ENCODE measurements at regions of chr15 and their contacts with region 1.

Region 1: GRCh38 chr15:40108855-40109735 is at the start of gene BMF:
- DNase-seq: peak; percentile 95
- H3K4me3 Mint-ChIP-seq: peak within 1 kb of the TSS; percentile 92
- H3K27ac Mint-ChIP-seq: peak within 1 kb of the TSS; percentile 87
- H3K4me1 Mint-ChIP-seq: peaks cover 51% of the 10 kb centered on the region
- H3K27me3 Mint-ChIP-seq: peaks cover 12% of the 10 kb centered on the region
- total RNA-seq, gene BMF: 10.1 and 16.5 TPM in 2 replicates

Region 2: GRCh38 chr15:39782441-39783138 is 326.5 kb before region 1 on chr15 and contains the start of gene FSIP1:
- intact Hi-C with region 1: loop called (anchors 2 kb)
- DNase-seq: peak; percentile 94
- H3K4me3 Mint-ChIP-seq: peak within 1 kb of the TSS; percentile 86
- H3K27ac Mint-ChIP-seq: peak within 1 kb of the TSS; percentile 75
- H3K4me1 Mint-ChIP-seq: peaks cover 43% of the 10 kb centered on the region
- H3K27me3 Mint-ChIP-seq: peaks cover 7% of the 10 kb centered on the region
- total RNA-seq, gene FSIP1: 0.26 and 0.34 TPM in 2 replicates

Region 3: GRCh38 chr15:40038638-40039543 is 70.2 kb before region 1 on chr15 and contains the start of gene SRP14:
- intact Hi-C with region 1: loop called (anchors 1 kb)
- DNase-seq: peak; percentile 88
- H3K4me3 Mint-ChIP-seq: peak within 1 kb of the TSS; percentile 100
- H3K27ac Mint-ChIP-seq: peak within 1 kb of the TSS; percentile 98
- H3K4me1 Mint-ChIP-seq: peaks cover 44% of the 10 kb centered on the region
- H3K27me3 Mint-ChIP-seq: no peaks in the 10 kb centered on the region
- total RNA-seq, gene SRP14: 144 and 147 TPM in 2 replicates

Region 4: DNA sequence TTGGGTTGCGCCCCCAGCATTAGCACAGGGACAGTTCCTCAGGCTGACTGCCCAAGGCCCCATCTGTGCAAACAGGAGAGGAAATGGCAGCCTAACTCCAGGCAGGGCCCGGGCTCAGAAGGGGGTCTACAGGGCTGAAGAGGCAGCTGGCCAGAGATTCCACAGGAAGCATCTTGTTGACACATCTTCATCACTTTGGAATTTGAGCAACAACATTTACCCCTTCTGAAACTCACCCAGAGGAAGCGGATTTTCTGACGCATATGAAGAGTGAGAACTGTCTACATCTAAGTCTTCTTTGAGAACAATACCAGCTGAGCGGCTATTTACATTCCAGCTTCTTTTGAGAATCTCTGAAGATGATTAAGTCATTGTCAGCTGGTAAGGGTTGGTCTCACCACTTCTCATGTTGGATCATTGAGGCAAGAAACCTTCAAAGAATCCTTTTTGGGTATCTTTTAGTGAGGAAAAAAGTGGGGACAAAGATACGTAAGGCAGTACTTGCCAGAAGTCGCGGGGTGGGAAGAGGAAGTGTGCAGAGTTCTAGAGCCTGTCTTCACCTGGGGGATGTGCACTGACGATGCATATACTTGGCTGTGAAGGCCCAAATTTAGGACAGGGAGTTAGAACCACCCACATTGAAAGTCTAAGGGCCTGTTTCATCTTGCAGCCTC is 44.7 kb before region 1 on chr15:
- intact Hi-C with region 1: loop called (anchors 1 kb)
- DNase-seq: no peak
- H3K4me3 Mint-ChIP-seq: peak overlapping the region; percentile 68
- H3K27ac Mint-ChIP-seq: peak overlapping the region; percentile 90
- H3K4me1 Mint-ChIP-seq: peaks cover 19% of the 10 kb centered on the region
- H3K27me3 Mint-ChIP-seq: no peaks in the 10 kb centered on the region

Region 5: DNA sequence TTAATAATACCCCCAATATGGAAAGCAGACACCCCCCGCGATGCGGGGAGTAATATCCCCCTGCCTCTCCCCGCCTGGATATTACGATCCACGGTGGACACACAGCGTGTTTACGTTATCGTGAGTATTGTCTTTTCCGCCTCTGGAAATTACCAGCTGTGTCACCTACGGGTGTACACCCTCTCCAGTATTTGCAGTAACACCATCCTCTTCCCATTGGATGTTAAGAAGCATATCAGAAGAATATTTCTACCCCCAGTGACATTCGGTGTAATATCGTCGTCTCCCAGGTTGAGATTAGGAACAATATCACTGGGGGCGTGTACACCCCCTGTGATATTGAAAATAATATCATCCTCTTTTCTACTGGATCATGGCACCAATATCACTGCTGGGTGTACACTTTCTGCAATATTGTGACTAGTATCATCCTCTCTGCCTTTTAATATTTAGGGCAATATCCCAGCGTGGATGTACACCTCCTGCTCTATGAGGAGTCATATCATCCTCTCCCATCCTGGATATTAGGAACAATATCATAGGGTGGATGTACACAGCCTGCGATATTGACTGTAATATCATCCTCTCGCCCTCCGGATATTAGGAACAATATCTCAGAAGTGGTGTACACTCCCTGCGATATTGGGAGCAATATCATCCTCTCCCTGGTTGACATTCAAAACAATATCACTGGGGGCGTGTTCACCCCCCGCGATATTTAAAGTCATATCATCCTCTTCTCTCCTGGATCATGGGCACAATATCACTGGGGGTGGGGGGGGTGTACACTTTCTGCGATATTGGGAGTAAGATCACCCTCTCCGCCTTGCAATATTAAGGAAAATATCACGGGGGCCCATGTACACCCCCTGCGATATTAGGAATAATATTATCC is 19.9 kb after region 1 on chr15:
- intact Hi-C with region 1: loop called (anchors 2 kb)
- DNase-seq: no peak
- H3K4me3 Mint-ChIP-seq: no peak overlapping the region
- H3K27ac Mint-ChIP-seq: no peak overlapping the region
- H3K4me1 Mint-ChIP-seq: no peaks in the 10 kb centered on the region
- H3K27me3 Mint-ChIP-seq: no peaks in the 10 kb centered on the region

Region 6: GRCh38 chr15:40274350-40275274 is 165.5 kb after region 1 on chr15:
- intact Hi-C with region 1: loop called (anchors 5 kb)
- DNase-seq: peak; percentile 83
- H3K4me3 Mint-ChIP-seq: no peak overlapping the region
- H3K27ac Mint-ChIP-seq: no peak overlapping the region
- H3K4me1 Mint-ChIP-seq: peaks cover 5% of the 10 kb centered on the region
- H3K27me3 Mint-ChIP-seq: peaks cover 31% of the 10 kb centered on the region

Region 7: DNA sequence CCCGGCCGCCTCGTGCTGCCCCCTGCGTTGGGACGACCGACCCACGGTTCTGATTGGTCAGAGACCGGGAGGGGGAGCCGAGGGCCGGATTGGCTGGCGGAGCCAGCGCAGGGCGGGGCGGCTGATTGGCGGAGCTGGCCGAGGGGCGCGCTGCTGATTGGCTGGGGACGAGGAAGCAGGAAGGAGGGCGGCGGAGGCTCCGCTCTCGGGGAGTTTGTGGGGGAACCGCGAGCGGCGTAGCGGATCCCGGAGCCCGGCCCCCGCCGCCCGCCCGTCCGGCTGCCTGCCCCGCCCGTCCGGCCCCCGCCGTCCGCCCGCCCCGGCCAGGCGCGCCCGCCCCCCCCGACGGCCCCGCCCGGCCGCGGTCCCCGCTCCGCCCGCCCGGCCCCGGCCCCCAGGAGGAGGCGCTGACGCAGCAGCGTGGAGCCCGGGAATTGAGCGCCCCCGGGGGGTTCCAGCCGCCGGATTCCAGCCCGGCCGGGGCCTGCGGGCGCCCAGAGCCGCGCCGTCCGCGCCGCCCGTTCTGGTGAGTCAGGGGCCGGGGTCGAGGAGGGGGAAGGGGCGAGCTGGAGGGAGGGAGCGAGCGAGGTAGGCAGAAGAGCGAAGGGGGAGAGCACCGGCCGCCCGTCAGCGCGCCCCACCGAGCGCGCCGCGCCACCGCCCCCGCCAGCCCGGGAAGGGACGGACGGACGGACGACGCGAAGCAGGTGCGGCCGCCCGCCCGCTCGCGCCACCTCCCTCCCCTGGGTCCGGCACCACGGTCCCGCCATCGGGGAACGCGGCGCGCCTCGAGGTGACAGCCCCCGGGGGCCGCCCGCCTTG is 331.9 kb after region 1 on chr15 and contains the start of gene BAHD1:
- intact Hi-C with region 1: loop called (anchors 5 kb)
- DNase-seq: peak; percentile 96
- H3K4me3 Mint-ChIP-seq: peak within 1 kb of the TSS; percentile 95
- H3K27ac Mint-ChIP-seq: peak within 1 kb of the TSS; percentile 87
- H3K4me1 Mint-ChIP-seq: peaks cover 26% of the 10 kb centered on the region
- H3K27me3 Mint-ChIP-seq: peaks cover 53% of the 10 kb centered on the region
- total RNA-seq, gene BAHD1: 26.5 and 26.9 TPM in 2 replicates

Region 8: DNA sequence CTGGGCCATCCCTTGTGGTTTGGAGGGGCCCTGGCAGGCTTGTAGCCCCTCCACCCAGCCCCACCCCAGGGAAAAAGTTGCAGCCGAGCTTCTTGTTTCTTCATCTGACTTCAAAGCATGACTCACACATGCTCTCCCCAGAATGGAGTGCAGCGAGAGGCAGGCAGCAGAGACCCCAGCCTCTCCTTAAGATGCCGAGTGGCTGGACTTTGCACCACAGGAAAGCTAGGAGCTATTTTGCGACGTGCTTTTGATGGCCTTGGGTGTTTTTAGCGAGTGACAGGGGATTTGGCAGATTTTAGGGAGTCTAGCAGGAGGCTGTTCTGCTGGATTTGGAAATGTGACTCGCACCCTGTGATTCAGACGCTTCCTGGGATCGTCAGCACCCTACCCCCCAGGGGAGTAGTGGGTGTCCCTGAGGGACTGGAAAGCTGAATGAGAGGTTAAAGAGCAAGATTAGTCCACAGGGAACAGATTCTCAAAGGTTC is 345.9 kb after region 1 on chr15:
- intact Hi-C with region 1: no loop called
- DNase-seq: no peak
- H3K4me3 Mint-ChIP-seq: no peak overlapping the region
- H3K27ac Mint-ChIP-seq: peak overlapping the region; percentile 74
- H3K4me1 Mint-ChIP-seq: peaks cover 69% of the 10 kb centered on the region
- H3K27me3 Mint-ChIP-seq: no peaks in the 10 kb centered on the region

Measured in activated T-helper 1 cell treated with anti-CD3 and anti-CD28 coated beads, Interleukin-12 subunit alpha, Interleukin-12 subunit beta, Interleukin-2, Interleukin-4 antibody, amounts not matched to agents 30 ng/mL and 10 ng/mL and 1 ng/mL, durations not matched to agents 14 hours and 24 hours and 36 hours (primary cell).